ENCODE measurements at regions of chr4 and their contacts with region 1.

Region 1: DNA sequence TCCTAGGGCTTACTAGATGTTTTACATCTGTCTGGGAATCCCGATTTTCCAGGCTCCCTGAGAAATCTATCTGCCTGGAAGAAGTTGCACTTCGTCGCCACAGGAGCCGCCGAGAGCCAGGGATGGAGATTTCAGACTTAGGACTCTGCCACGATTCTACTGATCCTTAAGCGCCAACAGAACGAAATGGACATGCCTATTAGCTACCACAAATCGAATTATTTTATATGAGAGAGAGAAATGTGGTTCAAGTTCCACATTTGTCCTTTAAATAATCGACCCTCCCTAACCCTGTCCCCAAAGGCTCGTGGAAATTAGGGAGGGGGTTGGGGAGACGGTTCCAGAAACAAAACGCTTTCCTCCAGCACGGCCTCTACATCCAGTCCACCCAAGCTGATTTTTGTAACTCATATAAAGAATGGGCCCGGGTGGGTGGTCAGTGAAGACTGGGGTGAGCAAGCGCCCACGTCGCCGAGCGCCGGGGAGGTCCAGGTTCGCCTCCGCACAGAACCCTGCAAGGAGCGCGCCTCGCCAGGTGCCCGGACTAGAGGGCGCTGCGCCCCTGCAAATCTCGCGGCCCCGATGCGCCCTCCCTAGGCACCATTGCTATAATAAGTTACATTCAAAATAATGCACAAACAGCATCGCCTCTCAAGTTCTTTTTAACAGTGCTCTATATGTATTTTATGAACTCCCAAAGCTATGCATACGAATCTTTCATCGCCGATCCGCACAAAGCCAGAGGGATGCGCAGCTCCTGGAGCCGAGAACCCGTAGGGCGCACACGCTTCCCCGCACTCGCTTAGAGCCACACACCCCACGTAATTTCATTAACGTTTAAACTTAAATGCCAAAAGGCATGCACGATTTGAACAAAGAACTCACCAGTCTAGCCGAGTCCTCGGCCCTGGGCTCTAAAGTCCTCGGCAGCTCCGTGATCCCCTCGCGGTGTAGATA is 2.1 kb upstream of the FAT1 start:
- DNase-seq: peak; percentile 85 to 92 (median 91)
- ATAC-seq: peak; percentile 75
- H3K4me3 ChIP-seq: peak overlapping the region; percentile 82
- H3K4me1 ChIP-seq: peaks cover 7% of the 10 kb centered on the region
- CTCF ChIP-seq: peak; percentile 66

Region 2: GRCh38 chr4:186936496-186937375 is 211.0 kb after region 1 on chr4:
- intact Hi-C with region 1: loop called in 1 of 2 experiments (anchors 5 kb)
- DNase-seq: no peak
- ATAC-seq: peak; percentile 86
- H3K4me3 ChIP-seq: no peak overlapping the region
- H3K4me1 ChIP-seq: peaks cover 28% of the 10 kb centered on the region
- CTCF ChIP-seq: peak; percentile 39

Region 3: DNA sequence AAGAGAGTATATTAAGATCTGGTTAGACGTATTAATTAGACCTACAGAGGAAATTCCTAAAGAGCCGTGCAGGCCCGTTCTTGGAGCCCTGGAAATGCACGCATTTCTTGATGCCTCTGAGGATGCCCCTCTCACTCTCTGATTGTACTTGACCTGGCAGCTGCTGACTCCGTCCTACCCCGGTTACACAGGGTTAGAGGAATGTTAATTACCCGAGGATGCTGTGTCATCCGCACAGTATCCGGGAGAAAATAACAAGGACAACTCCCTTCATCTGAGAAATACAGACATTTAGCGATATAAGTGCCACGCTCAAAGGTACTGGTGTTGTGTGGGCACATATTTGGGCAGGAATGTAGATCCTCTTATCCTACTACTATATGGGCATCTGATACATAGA is 402.5 kb after region 1 on chr4:
- intact Hi-C with region 1: no loop called
- DNase-seq: no peak
- ATAC-seq: no peak
- H3K4me3 ChIP-seq: no peak overlapping the region
- H3K4me1 ChIP-seq: no peaks in the 10 kb centered on the region
- CTCF ChIP-seq: no peak